Tibial artery (tissue), 4 donors: ENCODE measurements at regions of chr21 and their contacts with region 1.

Region 1: GRCh38 chr21:31198575-31198974 is 145.5 kb downstream of the TIAM1 start:
- DNase-seq: no peak
- H3K4me3 ChIP-seq: no peak overlapping the region
- H3K27ac ChIP-seq: no peak overlapping the region
- H3K4me1 ChIP-seq: no peaks in the 10 kb centered on the region
- H3K27me3 ChIP-seq: peaks cover 0 to 4% of the 10 kb centered on the region in 2 donors
- CTCF ChIP-seq: peak; percentile 35 to 50

Region 2: GRCh38 chr21:31604591-31605190 is 406.1 kb after region 1 on chr21:
- intact Hi-C with region 1: loop called (anchors 10 kb)
- DNase-seq: peak in 1 of 2 donors; percentile 42
- H3K4me3 ChIP-seq: no peak overlapping the region
- H3K27ac ChIP-seq: no peak overlapping the region
- H3K4me1 ChIP-seq: no peaks in the 10 kb centered on the region
- H3K27me3 ChIP-seq: peaks cover 0 to 2% of the 10 kb centered on the region in 2 donors
- CTCF ChIP-seq: peak; percentile 66 to 80

Region 3: GRCh38 chr21:32529679-32530078 is 1331.1 kb after region 1 on chr21:
- intact Hi-C with region 1: no loop called
- DNase-seq: no peak
- H3K4me3 ChIP-seq: no peak overlapping the region
- H3K27ac ChIP-seq: no peak overlapping the region
- H3K4me1 ChIP-seq: no peaks in the 10 kb centered on the region
- H3K27me3 ChIP-seq: no peaks in the 10 kb centered on the region
- CTCF ChIP-seq: no peak